Ovary (tissue), 10 donors: ENCODE measurements at regions of chr3 and their contacts with region 1.

Region 1: DNA sequence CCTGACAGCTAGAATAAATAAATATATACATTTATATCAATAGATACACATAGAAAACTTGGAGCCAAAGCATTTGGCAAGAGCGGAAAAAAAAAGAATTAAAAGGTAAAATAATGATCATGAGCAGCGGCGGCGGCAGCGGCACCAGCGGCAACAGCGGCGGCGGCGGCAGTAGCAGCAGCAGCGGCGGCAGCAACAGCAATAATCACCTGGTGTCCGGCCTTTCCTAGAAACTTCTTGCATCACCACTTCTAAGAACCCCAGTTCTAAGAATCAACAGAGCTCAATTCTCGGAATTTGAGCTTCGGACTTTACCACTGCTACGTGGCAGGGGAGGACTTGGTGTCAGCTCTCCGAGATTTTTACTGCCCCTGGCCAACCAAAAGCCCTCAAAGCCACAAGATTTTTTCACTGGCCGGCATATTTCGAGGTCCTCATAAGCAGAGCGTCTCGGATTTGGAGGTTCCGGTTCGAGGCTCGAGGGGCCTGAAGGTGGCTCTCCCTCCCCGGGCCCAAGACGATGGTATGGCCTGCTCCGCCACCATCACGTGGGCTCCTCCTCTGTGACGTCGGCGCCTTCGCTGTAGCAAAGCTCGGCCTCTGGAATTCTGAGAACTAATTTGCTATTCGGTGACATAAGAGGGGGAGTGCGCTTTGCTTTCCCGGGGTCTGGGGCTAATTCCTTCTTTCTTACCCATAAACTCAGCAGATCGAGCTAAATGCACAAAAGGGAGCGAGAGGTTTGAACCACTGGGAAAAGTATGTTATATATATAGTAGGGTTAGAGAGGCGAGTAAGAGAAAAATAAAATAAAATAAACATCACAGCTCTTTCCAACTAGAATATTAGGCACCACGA is at the start of gene BCL6:
- DNase-seq: peak; percentile 94 to 96 (median 95)
- H3K4me3 ChIP-seq: peak within 1 kb of the TSS; percentile 88
- H3K27ac ChIP-seq: peak within 1 kb of the TSS; percentile 94 to 100
- H3K4me1 ChIP-seq: no peaks in the 10 kb centered on the region
- H3K27me3 ChIP-seq: no peaks in the 10 kb centered on the region
- CTCF ChIP-seq: peak in 2 of 3 donors; percentile 21 to 26
- EP300 ChIP-seq: peak; percentile 99
- POLR2A ChIP-seq: peak; percentile 93
- total RNA-seq, gene BCL6: 51.6 to 91.1 (median 60.2) TPM

Region 2: GRCh38 chr3:187694801-187695200 is 50.6 kb before region 1 on chr3:
- intact Hi-C with region 1: no loop called
- DNase-seq: no peak
- H3K4me3 ChIP-seq: no peak overlapping the region
- H3K27ac ChIP-seq: no peak overlapping the region
- H3K4me1 ChIP-seq: no peaks in the 10 kb centered on the region
- H3K27me3 ChIP-seq: no peaks in the 10 kb centered on the region
- CTCF ChIP-seq: no peak
- EP300 ChIP-seq: no peak
- POLR2A ChIP-seq: no peak

Region 3: DNA sequence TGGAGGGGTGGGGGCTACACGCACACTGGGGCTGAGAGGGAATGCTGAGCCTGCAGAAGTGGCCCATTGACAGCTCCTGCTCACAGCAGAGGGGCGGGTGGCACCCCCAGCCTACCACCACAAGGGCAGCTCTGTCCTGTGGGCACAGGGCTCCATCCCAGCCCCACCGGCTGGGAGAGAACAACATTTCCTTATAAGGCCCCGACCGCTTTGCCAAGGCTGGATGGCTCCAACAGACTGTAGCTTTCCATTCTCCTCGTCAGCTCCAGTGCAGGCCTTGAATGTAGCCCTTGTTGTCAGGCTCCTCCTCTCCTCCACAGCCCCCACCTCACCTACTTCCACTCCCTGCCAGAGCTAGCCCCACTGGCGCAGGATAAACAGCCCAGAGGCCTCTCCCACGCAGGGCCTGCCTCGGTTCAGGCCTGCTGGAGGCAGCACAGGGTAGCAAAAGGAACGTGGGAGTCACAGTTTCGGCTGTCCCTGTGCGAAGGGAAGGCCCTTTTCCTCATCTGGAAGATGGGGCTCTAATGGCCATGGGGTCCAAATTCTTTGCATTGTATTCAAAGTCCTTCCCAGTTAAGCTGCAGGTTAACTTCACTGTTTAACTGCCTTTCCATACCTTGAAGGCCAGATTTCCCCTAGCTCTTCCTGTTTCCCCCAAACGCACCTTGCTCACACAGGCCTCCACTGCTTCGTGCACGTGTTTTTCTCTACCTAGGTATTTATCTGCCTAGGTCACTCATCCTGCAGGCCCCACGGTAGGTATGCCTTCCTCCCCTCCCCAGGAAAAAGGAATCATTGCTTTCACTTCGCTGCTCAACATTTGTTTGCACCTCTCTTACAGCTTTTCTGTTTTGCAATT is 307.0 kb after region 1 on chr3:
- intact Hi-C with region 1: loop called (anchors 2 to 10 kb)
- DNase-seq: peak; percentile 93 to 95 (median 94)
- H3K4me3 ChIP-seq: peak overlapping the region; percentile 13
- H3K27ac ChIP-seq: peak overlapping the region; percentile 53 to 85
- H3K4me1 ChIP-seq: peaks cover 15% of the 10 kb centered on the region
- H3K27me3 ChIP-seq: no peaks in the 10 kb centered on the region
- CTCF ChIP-seq: peak; percentile 71 to 85 (median 85)
- EP300 ChIP-seq: no peak
- POLR2A ChIP-seq: no peak

Region 4: DNA sequence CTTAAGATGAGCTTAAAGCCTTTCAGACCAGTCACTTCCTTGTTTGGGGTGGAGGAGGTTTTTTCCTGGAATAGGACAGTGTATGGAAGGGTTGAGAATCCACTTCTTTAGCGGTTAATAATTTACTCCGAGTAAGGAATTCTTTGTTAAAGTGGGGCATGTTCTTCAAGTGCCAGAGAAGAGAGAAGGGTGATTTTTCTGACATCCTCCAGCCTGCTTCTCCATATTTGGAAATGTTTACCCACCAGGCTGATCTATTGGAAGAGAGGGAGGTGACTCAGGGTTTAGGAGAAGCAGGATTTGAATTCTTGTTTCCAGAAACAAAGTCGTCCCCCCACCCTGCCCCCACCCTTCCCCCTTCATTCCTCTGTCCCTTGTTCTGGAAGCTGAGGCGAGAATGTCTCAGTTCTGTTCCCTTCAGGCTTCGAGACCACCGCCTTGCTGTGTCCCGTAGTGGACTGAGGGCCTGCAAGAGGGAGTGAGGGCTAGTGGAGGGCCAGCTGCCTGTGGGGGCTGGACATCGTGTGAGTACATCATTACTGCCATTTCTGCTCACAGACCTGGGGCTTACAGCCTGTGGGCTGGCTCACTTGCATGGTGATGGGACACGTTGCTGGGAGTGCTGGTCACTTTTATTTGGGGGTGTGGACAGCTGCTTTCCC is 467.0 kb after region 1 on chr3:
- intact Hi-C with region 1: loop called in 1 of 4 experiments (anchors 10 kb)
- DNase-seq: no peak
- H3K4me3 ChIP-seq: peak overlapping the region; percentile 33
- H3K27ac ChIP-seq: peak overlapping the region; percentile 8 to 17
- H3K4me1 ChIP-seq: peaks cover 14% of the 10 kb centered on the region
- H3K27me3 ChIP-seq: no peaks in the 10 kb centered on the region
- CTCF ChIP-seq: no peak
- EP300 ChIP-seq: no peak
- POLR2A ChIP-seq: no peak

Region 5: GRCh38 chr3:188294823-188295487 is 549.5 kb after region 1 on chr3:
- intact Hi-C with region 1: loop called in 1 of 4 experiments (anchors 10 kb)
- DNase-seq: peak in 1 of 5 donors; percentile 52
- H3K4me3 ChIP-seq: no peak overlapping the region
- H3K27ac ChIP-seq: no peak overlapping the region
- H3K4me1 ChIP-seq: peaks cover 24% of the 10 kb centered on the region
- H3K27me3 ChIP-seq: no peaks in the 10 kb centered on the region
- CTCF ChIP-seq: no peak
- EP300 ChIP-seq: peak; percentile 83
- POLR2A ChIP-seq: no peak

Region 6: GRCh38 chr3:188624384-188624783 is 879.0 kb after region 1 on chr3:
- intact Hi-C with region 1: loop called in 1 of 4 experiments (anchors 10 kb)
- DNase-seq: no peak
- H3K4me3 ChIP-seq: no peak overlapping the region
- H3K27ac ChIP-seq: no peak overlapping the region
- H3K4me1 ChIP-seq: peaks cover 4% of the 10 kb centered on the region
- H3K27me3 ChIP-seq: no peaks in the 10 kb centered on the region
- CTCF ChIP-seq: no peak
- EP300 ChIP-seq: peak; percentile 48
- POLR2A ChIP-seq: no peak